OCI-LY7 (cell line): ENCODE measurements at regions of chr18 and their contacts with region 1.

Region 1: GRCh38 chr18:24488824-24489493 is 28.5 kb downstream of the HRH4 start:
- DNase-seq: peak; percentile 67
- H3K4me3 ChIP-seq: no peak overlapping the region
- H3K27ac ChIP-seq: peak overlapping the region; percentile 8
- H3K4me1 ChIP-seq: peaks cover 44% of the 10 kb centered on the region
- CTCF ChIP-seq: peak; percentile 90

Region 2: GRCh38 chr18:23437357-23438045 is 1051.5 kb before region 1 on chr18:
- CTCF ChIA-PET with region 1: no interaction called
- POLR2A ChIA-PET with region 1: no interaction called
- intact Hi-C with region 1: no loop called
- DNase-seq: peak; percentile 86
- H3K4me3 ChIP-seq: peak overlapping the region; percentile 95
- H3K27ac ChIP-seq: no peak overlapping the region
- H3K4me1 ChIP-seq: peaks cover 11% of the 10 kb centered on the region
- CTCF ChIP-seq: no peak

Region 3: GRCh38 chr18:24176727-24177416 is 312.1 kb before region 1 on chr18:
- CTCF ChIA-PET with region 1: interaction called, 4 read pairs
- POLR2A ChIA-PET with region 1: no interaction called
- intact Hi-C with region 1: loop called (anchors 5 kb)
- DNase-seq: peak; percentile 68
- H3K4me3 ChIP-seq: peak overlapping the region; percentile 20
- H3K27ac ChIP-seq: no peak overlapping the region
- H3K4me1 ChIP-seq: peaks cover 9% of the 10 kb centered on the region
- CTCF ChIP-seq: peak; percentile 89

Region 4: DNA sequence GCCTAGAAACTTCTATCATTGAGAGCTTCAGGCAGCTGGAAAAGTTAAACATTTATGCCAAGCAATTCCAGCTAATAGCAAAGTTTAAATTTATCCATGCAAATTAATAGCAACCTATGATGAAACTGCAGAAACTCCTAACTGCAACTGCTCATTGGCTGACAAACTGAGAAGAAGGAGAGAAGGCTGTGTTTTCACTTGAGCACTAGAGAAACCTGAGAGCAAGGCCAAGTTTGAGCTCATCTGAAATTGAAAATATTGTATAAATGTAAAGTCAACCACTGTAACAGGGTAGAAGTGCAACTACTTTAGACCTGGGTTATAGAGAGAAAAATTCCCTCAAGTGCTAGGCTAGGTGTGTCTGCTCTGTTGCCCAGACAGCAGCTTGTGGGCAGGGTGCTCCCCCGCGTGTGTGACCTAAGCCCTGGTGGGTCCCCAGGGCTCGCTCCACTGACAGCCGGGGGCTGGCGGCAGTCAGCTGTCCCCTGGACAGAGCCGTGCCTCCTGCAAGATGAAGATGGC is 299.9 kb before region 1 on chr18:
- CTCF ChIA-PET with region 1: no interaction called
- POLR2A ChIA-PET with region 1: no interaction called
- intact Hi-C with region 1: no loop called
- DNase-seq: no peak
- H3K4me3 ChIP-seq: no peak overlapping the region
- H3K27ac ChIP-seq: no peak overlapping the region
- H3K4me1 ChIP-seq: no peaks in the 10 kb centered on the region
- CTCF ChIP-seq: no peak

Region 5: DNA sequence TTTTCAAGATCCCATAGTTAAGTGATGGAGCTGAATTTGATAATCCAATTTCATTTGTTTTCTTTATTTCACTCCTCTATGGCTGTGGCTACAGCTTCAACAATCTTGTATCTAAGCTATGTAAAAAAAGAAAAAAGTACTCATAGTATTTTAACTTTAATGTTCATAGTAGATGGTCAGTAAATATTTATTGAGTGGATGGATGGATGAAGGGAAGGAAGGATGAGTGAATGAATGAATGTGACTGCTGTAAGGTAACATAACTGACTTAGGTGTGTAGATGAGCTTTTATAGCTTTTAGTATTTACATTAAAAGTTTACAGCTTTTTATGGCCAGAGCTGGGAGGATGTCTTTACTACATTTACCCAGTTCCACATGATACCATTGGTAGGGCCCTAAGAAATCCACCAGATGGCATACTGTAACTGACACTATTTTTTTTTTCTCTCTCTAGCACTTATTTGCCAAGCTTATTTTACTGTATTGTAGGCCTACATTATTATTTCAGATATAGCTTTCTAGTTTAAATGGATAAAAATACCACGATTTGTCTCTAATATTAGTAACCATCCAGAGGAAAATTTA is 41.9 kb before region 1 on chr18:
- CTCF ChIA-PET with region 1: interaction called, 11 read pairs
- POLR2A ChIA-PET with region 1: interaction called, 5 read pairs
- intact Hi-C with region 1: no loop called
- DNase-seq: peak; percentile 3
- H3K4me3 ChIP-seq: no peak overlapping the region
- H3K27ac ChIP-seq: no peak overlapping the region
- H3K4me1 ChIP-seq: no peaks in the 10 kb centered on the region
- CTCF ChIP-seq: peak; percentile 49

Region 6: DNA sequence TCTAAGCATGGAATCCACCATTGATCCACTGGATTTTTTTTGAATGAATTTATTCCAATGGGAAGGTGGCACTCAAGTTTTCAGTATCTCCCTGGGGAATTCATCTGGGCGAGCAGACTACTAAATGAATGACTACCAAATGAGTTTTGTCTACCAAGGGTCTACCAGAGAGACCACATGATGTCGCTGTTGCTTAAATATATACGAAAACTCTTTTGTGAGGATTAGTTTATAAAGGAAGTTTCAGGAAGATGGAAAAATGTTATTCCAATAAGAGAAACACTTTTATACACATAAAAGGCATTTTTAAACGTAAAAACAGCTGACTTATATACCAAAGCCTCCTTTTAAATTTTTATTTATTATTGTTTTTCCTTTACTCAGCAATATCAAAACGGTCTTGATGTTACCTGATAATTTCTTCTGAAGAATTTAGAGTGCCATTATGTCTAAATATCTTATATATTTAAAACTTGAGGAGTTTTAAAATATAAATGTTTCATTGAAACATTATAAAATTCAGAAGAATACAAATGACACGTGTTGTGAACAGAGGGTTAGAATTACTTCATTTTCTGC is 111.2 kb after region 1 on chr18:
- CTCF ChIA-PET with region 1: no interaction called
- POLR2A ChIA-PET with region 1: no interaction called
- intact Hi-C with region 1: loop called (anchors 2 kb)
- DNase-seq: peak; percentile 66
- H3K4me3 ChIP-seq: no peak overlapping the region
- H3K27ac ChIP-seq: no peak overlapping the region
- H3K4me1 ChIP-seq: no peaks in the 10 kb centered on the region
- CTCF ChIP-seq: peak; percentile 91

Region 7: GRCh38 chr18:24928301-24928878 is 439.4 kb after region 1 on chr18:
- CTCF ChIA-PET with region 1: no interaction called
- POLR2A ChIA-PET with region 1: no interaction called
- intact Hi-C with region 1: loop called (anchors 5 kb)
- DNase-seq: peak; percentile 82
- H3K4me3 ChIP-seq: peak overlapping the region; percentile 29
- H3K27ac ChIP-seq: peak overlapping the region; percentile 91
- H3K4me1 ChIP-seq: peaks cover 84% of the 10 kb centered on the region
- CTCF ChIP-seq: no peak